ENCODE measurements at regions of chr9 and their contacts with region 1.

Region 1: DNA sequence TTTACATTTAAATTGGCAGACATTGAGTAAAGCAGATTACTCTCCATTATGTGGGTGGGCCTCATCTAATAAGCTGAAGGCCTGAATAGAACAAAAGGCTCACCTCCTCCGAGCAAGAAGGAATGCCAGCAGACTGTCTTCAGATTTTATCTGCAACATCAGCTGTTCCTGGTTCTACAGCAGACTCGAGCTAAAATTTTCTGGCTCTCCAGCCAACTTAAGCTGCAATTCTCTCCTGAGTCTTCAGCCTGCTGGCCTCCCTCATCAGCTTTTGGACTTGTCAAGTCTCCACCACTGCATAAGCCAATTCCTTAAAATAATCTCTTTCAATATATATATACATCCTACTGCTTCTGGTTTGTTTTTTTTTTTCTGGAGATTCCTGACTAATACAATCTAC is 12.5 kb downstream of the TRPM3 start:
- DNase-seq: no peak
- ATAC-seq: no peak
- H3K4me3 ChIP-seq: no peak overlapping the region
- H3K27ac ChIP-seq: no peak overlapping the region
- H3K4me1 ChIP-seq: no peaks in the 10 kb centered on the region
- H3K27me3 ChIP-seq: no peaks in the 10 kb centered on the region
- CTCF ChIP-seq: no peak

Region 2: DNA sequence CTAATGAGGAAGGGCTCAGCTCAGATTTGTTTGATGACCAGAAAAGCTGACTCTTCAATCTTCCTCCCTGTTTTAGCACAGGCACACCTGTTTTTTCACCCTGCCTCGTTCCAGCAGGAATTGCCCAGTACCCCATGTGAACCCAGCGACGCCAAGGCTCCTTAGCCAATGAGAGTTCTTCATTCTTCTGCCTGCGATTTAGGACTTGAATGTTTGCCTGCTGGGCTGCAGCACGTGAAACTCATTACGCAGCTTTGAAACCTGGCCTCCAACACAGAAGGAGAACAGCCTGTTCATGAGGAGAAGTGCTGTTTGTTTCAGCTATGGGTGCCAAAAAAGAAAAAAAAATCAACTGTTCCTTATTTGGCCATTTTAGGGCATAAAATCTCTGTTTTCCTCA is 303.0 kb before region 1 on chr9:
- intact Hi-C with region 1: no loop called
- DNase-seq: no peak
- ATAC-seq: no peak
- H3K4me3 ChIP-seq: no peak overlapping the region
- H3K27ac ChIP-seq: no peak overlapping the region
- H3K4me1 ChIP-seq: no peaks in the 10 kb centered on the region
- H3K27me3 ChIP-seq: peaks cover 0 to 6% (median 0%) of the 10 kb centered on the region in 7 donors
- CTCF ChIP-seq: no peak

Region 3: DNA sequence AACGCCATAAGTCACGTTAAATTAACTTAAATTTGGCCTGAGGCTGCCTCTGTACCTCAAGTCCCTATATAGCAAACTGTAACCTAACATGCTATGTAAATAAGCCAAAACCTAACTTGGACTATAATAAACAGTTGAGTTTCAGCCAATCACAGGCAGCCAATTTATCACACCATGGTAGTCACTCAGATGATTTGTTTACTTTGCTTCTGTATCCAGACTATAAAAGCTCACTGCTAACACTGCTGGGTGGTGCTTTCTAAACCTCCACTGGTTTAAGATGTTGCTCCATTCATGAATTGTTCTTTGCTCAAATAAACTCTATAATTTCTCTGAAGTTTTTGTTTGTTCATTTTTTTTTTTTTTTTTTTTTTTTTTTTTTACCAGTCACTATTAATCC is 50.3 kb before region 1 on chr9:
- intact Hi-C with region 1: loop called in 1 of 10 experiments (anchors 10 kb)
- DNase-seq: no peak
- ATAC-seq: no peak
- H3K4me3 ChIP-seq: no peak overlapping the region
- H3K27ac ChIP-seq: no peak overlapping the region
- H3K4me1 ChIP-seq: no peaks in the 10 kb centered on the region
- H3K27me3 ChIP-seq: no peaks in the 10 kb centered on the region
- CTCF ChIP-seq: no peak

Region 4: GRCh38 chr9:71157731-71158130 is 48.8 kb after region 1 on chr9:
- intact Hi-C with region 1: no loop called
- DNase-seq: no peak
- ATAC-seq: no peak
- H3K4me3 ChIP-seq: no peak overlapping the region
- H3K27ac ChIP-seq: no peak overlapping the region
- H3K4me1 ChIP-seq: no peaks in the 10 kb centered on the region
- H3K27me3 ChIP-seq: no peaks in the 10 kb centered on the region
- CTCF ChIP-seq: no peak